Activated CD8-positive, alpha-beta T cell treated with anti-CD3 and anti-CD28 coated beads, Interleukin-2, amount 10 ng/mL, durations not matched to agents 7 days and 5 days (primary cell): ENCODE measurements at regions of chr16 and their contacts with region 1.

Region 1: GRCh38 chr16:72066747-72067146 is 3.7 kb downstream of the HPR start:
- DNase-seq: peak; percentile 22
- ATAC-seq: no peak
- H3K4me3 Mint-ChIP-seq: no peak overlapping the region
- H3K27ac Mint-ChIP-seq: no peak overlapping the region
- H3K4me1 Mint-ChIP-seq: no peaks in the 10 kb centered on the region
- H3K27me3 Mint-ChIP-seq: no peaks in the 10 kb centered on the region

Region 2: GRCh38 chr16:72093448-72094265 is 26.9 kb after region 1 on chr16 and contains the starts of genes DHX38 and TXNL4B:
- CTCF ChIA-PET with region 1: interaction called, 25 read pairs
- POLR2A ChIA-PET with region 1: interaction called, 7 read pairs
- DNase-seq: peak; percentile 96
- ATAC-seq: peak; percentile 98
- H3K4me3 Mint-ChIP-seq: peak within 1 kb of the TSS; percentile 96
- H3K27ac Mint-ChIP-seq: peak within 1 kb of the TSS; percentile 98
- H3K4me1 Mint-ChIP-seq: peaks cover 34% of the 10 kb centered on the region
- H3K27me3 Mint-ChIP-seq: no peaks in the 10 kb centered on the region
- total RNA-seq, gene DHX38: 69.3 to 77.1 TPM
- total RNA-seq, gene TXNL4B: 14.9 to 16.7 TPM

Region 3: DNA sequence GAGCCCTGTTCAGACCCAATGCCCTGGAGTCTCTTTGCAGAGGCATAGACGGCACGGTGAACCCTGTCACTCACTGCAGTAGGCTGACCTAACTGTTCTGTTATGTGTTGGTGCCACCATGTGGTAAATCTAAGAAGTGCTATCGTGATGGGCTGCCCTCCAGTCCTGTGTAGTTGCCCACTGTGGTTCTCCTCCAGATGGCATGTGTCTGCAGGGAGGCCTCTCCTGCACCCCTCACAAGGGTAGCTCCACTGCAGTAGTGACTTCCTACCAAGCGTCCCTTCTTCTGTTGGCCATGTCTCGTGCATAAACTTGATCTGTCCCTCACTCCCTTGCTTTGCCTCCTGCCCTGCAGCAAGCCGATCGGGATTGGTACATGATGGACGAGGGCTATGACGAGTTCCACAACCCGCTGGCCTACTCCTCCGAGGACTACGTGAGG is 32.7 kb after region 1 on chr16:
- CTCF ChIA-PET with region 1: interaction called, 25 read pairs
- POLR2A ChIA-PET with region 1: no interaction called
- DNase-seq: peak; percentile 71
- ATAC-seq: peak; percentile 92
- H3K4me3 Mint-ChIP-seq: no peak overlapping the region
- H3K27ac Mint-ChIP-seq: no peak overlapping the region
- H3K4me1 Mint-ChIP-seq: peaks cover 12% of the 10 kb centered on the region
- H3K27me3 Mint-ChIP-seq: no peaks in the 10 kb centered on the region

Region 4: DNA sequence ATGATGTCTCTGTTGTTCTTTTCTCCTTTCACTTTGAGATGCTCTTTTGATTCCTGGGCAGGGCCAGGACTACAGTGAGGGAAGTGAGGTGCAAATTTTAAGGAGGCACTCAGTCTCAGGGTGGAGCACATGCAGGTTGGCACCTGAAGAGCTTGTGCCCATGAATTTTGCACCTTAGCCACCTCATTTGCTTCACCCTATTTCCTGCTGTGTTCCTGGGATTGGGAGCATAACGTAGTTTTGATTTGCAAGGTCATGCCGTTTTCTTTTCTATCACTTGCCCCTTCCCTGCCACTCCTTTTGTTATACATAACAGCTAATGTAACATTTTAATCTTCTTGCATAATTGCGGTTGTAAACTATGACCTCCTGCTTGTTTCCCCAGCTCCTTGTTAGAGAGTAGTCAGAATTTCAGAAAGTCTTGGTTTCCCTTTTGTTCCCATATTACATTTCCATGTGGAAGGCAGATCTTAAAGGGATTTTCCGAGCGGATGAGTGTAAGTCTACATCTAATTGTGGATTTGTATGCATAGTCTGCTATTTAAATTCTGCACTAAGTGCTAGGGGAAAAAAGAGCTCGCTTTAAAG is 95.5 kb after region 1 on chr16:
- CTCF ChIA-PET with region 1: no interaction called
- POLR2A ChIA-PET with region 1: no interaction called
- DNase-seq: no peak
- ATAC-seq: no peak
- H3K4me3 Mint-ChIP-seq: no peak overlapping the region
- H3K27ac Mint-ChIP-seq: no peak overlapping the region
- H3K4me1 Mint-ChIP-seq: no peaks in the 10 kb centered on the region
- H3K27me3 Mint-ChIP-seq: peaks cover 2% of the 10 kb centered on the region